ENCODE measurements at regions of chr9 and their contacts with region 1.

Region 1: GRCh38 chr9:95317119-95317892 is at the start of gene FANCC:
- DNase-seq: peak; percentile 86
- ATAC-seq: peak; percentile 90
- H3K4me3 ChIP-seq: peak within 1 kb of the TSS; percentile 73 to 85 (median 85)
- H3K27ac ChIP-seq: peak within 1 kb of the TSS; percentile 100
- H3K4me1 ChIP-seq: peaks cover 64% of the 10 kb centered on the region
- H3K27me3 ChIP-seq: no peaks in the 10 kb centered on the region
- CTCF ChIP-seq: no peak
- EP300 ChIP-seq: no peak
- POLR2A ChIP-seq: peak; percentile 57 to 84
- RAD21 ChIP-seq: peak; percentile 40
- total RNA-seq, gene FANCC: 7.4 and 11.4 TPM in 2 replicates

Region 2: GRCh38 chr9:95270790-95271189 is 46.5 kb before region 1 on chr9:
- CTCF ChIA-PET with region 1: no interaction called
- POLR2A ChIA-PET with region 1: no interaction called
- in situ Hi-C with region 1: no loop called
- intact Hi-C with region 1: loop called (anchors 2 kb)
- DNase-seq: no peak
- ATAC-seq: no peak
- H3K4me3 ChIP-seq: no peak overlapping the region; a peak in 1 of 6 replicates
- H3K27ac ChIP-seq: peak overlapping the region; percentile 94
- H3K4me1 ChIP-seq: peaks cover 39% of the 10 kb centered on the region
- H3K27me3 ChIP-seq: no peaks in the 10 kb centered on the region
- CTCF ChIP-seq: no peak
- EP300 ChIP-seq: no peak
- POLR2A ChIP-seq: no peak
- RAD21 ChIP-seq: no peak

Region 3: GRCh38 chr9:95284150-95285080 is 32.9 kb before region 1 on chr9:
- CTCF ChIA-PET with region 1: no interaction called
- POLR2A ChIA-PET with region 1: no interaction called
- in situ Hi-C with region 1: no loop called
- intact Hi-C with region 1: loop called (anchors 5 kb)
- DNase-seq: no peak
- ATAC-seq: no peak
- H3K4me3 ChIP-seq: no peak overlapping the region
- H3K27ac ChIP-seq: no peak overlapping the region
- H3K4me1 ChIP-seq: peaks cover 23% of the 10 kb centered on the region
- H3K27me3 ChIP-seq: no peaks in the 10 kb centered on the region
- CTCF ChIP-seq: no peak
- EP300 ChIP-seq: no peak
- POLR2A ChIP-seq: no peak
- RAD21 ChIP-seq: no peak